Calu3 (cell line): ENCODE measurements at regions of chr9 and their contacts with region 1.

Region 1: DNA sequence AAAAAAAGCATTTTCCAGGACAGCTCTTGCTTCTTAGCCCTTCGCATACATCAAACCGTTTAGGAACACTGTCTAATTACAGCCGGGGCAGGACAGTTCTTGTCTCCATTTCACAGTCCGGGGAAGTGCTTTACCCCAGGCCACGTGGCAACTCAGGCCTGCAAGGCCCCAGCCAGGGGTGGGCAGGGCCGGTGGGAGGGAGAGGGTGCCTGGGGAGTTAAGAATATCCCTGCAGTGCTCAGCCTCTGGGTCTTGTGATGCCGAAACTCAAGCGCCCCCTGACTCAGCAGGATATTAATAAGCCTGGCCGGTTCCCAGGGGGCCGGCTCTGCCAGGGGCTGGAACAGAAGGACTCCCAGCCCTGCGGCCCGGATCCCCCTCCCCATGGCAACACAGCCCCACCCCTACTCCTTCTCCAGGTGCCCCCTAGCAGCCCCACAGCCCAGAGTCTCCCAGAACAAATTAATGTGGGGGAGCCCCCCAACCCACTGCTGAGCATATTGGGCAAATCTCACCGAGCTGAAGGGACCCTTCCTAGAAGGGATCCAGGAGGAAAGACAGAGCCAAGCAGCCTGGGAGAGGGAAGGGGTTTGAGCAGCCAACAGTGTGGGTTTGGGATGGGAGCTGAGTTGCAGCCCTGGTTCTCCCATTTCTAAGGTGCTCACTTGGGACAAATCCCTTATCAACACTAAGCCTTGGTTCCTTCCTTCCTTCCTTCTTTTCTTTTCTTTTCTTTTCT is 45.3 kb downstream of the PLPP7 start:
- DNase-seq: no peak
- H3K4me3 Mint-ChIP-seq: no peak overlapping the region
- H3K27ac Mint-ChIP-seq: no peak overlapping the region
- H3K4me1 Mint-ChIP-seq: no peaks in the 10 kb centered on the region
- H3K27me3 Mint-ChIP-seq: no peaks in the 10 kb centered on the region
- CTCF ChIP-seq: no peak

Region 2: GRCh38 chr9:131053896-131054295 is 280.9 kb before region 1 on chr9:
- CTCF ChIA-PET with region 1: interaction called, 5 read pairs
- intact Hi-C with region 1: loop called (anchors 5 kb)
- DNase-seq: no peak
- H3K4me3 Mint-ChIP-seq: no peak overlapping the region
- H3K27ac Mint-ChIP-seq: no peak overlapping the region
- H3K4me1 Mint-ChIP-seq: no peaks in the 10 kb centered on the region
- H3K27me3 Mint-ChIP-seq: peaks cover 27% of the 10 kb centered on the region
- CTCF ChIP-seq: no peak

Region 3: GRCh38 chr9:131178382-131178781 is 156.4 kb before region 1 on chr9:
- CTCF ChIA-PET with region 1: interaction called, 3 read pairs
- intact Hi-C with region 1: loop called (anchors 2 kb)
- DNase-seq: peak; percentile 49
- H3K4me3 Mint-ChIP-seq: no peak overlapping the region
- H3K27ac Mint-ChIP-seq: no peak overlapping the region
- H3K4me1 Mint-ChIP-seq: no peaks in the 10 kb centered on the region
- H3K27me3 Mint-ChIP-seq: no peaks in the 10 kb centered on the region
- CTCF ChIP-seq: peak; percentile 50

Region 4: GRCh38 chr9:131255676-131256197 is 79.1 kb before region 1 on chr9:
- CTCF ChIA-PET with region 1: interaction called, 10 read pairs
- intact Hi-C with region 1: no loop called
- DNase-seq: no peak
- H3K4me3 Mint-ChIP-seq: no peak overlapping the region
- H3K27ac Mint-ChIP-seq: no peak overlapping the region
- H3K4me1 Mint-ChIP-seq: no peaks in the 10 kb centered on the region
- H3K27me3 Mint-ChIP-seq: peaks cover 20% of the 10 kb centered on the region
- CTCF ChIP-seq: no peak

Region 5: DNA sequence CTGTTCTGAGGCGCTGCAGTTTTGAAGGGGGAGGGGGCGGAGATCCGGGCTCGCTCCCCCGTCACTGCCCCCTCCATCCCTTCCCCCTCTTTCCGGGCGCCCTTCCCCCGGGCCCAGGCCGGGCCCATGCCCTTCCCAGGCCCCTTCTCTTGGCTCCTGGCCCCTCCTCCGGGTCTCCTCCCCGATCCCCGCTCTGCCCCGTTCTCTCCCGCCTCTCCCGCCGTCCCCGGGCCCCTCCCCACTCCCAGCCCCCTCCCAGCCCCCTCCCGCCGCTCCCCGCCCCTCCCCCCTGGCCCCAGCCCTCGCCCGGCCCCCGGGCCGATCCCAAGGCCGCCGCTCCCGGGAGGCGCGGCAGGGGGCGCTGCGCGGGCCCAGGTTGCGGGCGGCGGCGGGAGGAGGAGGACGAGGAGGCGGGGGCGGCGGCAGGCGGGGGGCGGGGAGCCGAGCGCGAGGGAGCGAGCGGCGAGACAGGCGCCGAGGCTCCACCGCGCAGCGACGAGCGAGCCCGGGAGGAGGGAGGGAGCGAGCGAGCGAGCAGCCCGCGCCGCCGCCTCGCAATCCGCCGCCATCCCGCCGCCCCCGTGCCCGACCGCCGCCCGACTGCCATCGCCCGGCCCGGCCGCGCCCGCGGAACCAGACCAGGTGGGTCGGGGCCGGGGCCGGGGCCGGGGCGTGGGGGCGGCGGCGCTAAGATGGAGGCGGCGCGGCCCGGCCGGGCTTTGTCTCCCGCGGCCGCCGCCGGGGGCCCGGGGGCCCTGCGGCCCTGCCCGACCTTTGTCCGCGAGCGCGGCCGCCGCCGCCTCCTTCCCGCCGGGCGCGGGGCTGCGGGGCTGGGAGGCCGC is 59.0 kb after region 1 on chr9 and contains the start of gene PRRC2B:
- CTCF ChIA-PET with region 1: no interaction called
- intact Hi-C with region 1: no loop called
- DNase-seq: peak; percentile 83
- H3K4me3 Mint-ChIP-seq: peak within 1 kb of the TSS; percentile 83
- H3K27ac Mint-ChIP-seq: peak within 1 kb of the TSS; percentile 75
- H3K4me1 Mint-ChIP-seq: peaks cover 27% of the 10 kb centered on the region
- H3K27me3 Mint-ChIP-seq: no peaks in the 10 kb centered on the region
- CTCF ChIP-seq: peak; percentile 60
- total RNA-seq, gene PRRC2B: 137 and 143 TPM in 2 replicates